PC-9 (cell line): ENCODE measurements at regions of chr2 and their contacts with region 1.

Region 1: GRCh38 chr2:172710584-172711024 is 25.0 kb upstream of the RAPGEF4 start:
- DNase-seq: peak; percentile 82 to 100
- H3K4me3 ChIP-seq: no peak overlapping the region
- H3K27ac ChIP-seq: no peak overlapping the region
- H3K4me1 ChIP-seq: peaks cover 10% of the 10 kb centered on the region
- H3K27me3 ChIP-seq: no peaks in the 10 kb centered on the region
- CTCF ChIP-seq: peak; percentile 99

Region 2: DNA sequence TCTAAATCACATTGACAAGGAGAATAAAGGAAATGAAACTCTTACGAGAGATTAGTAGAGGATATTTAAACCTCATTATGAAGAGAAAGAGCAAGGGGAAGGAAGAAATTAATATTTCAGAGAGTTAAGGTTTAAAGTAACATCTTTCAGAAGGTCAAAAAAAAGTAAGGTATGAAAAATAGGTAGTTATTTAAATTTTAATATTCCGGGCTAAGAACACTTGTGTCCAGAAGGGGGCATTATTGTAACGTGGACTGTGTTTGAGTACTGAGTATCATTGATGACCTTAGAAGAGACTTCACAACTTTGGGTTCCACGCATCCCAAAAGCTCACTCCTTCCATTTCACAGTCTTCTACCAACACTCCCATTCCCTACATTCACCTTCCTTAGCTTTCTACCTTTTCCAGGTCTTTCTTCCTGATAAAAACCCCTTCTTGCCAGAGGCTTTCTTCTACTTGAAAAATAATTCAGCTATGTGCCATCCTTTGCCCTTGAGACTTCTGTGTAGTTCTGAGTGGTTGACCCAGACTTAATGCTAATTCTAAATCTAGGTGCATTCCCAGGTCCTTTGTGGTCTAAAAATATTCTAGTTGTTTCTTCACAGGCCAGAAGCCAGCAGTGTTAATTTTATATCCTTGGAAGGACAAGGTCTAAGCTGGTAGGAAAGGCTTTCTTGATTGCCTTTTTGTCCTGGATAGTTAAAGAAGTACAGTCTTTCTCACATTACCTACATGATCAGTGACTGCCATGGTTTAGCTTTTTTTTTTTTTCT is 1006.8 kb before region 1 on chr2:
- CTCF ChIA-PET with region 1: no interaction called
- POLR2A ChIA-PET with region 1: interaction called, 3 read pairs
- intact Hi-C with region 1: loop called (anchors 5 kb)
- DNase-seq: peak; percentile 10 to 59
- H3K4me3 ChIP-seq: no peak overlapping the region
- H3K27ac ChIP-seq: peak overlapping the region; percentile 18; the same call in 1 of the 2 replicates
- H3K4me1 ChIP-seq: no peaks in the 10 kb centered on the region
- H3K27me3 ChIP-seq: no peaks in the 10 kb centered on the region
- CTCF ChIP-seq: peak; percentile 85

Region 3: GRCh38 chr2:172484253-172484652 is 226.4 kb before region 1 on chr2:
- CTCF ChIA-PET with region 1: interaction called, 3 read pairs
- POLR2A ChIA-PET with region 1: no interaction called
- intact Hi-C with region 1: loop called (anchors 5 kb)
- DNase-seq: no peak
- H3K4me3 ChIP-seq: no peak overlapping the region
- H3K27ac ChIP-seq: no peak overlapping the region
- H3K4me1 ChIP-seq: 0 out of 2 replicates have a peak, but pooled peaks cover 5% of the 10 kb centered on the region
- H3K27me3 ChIP-seq: no peaks in the 10 kb centered on the region
- CTCF ChIP-seq: peak; percentile 89

Region 4: GRCh38 chr2:172588931-172589330 is 121.7 kb before region 1 on chr2:
- CTCF ChIA-PET with region 1: interaction called, 14 read pairs
- POLR2A ChIA-PET with region 1: no interaction called
- intact Hi-C with region 1: loop called (anchors 1 kb)
- DNase-seq: peak in 1 of 2 experiments; percentile 73
- H3K4me3 ChIP-seq: no peak overlapping the region
- H3K27ac ChIP-seq: 0 out of 2 replicates have a peak overlapping the region, but pooled peaks have one; percentile 1
- H3K4me1 ChIP-seq: peaks cover 13% of the 10 kb centered on the region
- H3K27me3 ChIP-seq: no peaks in the 10 kb centered on the region
- CTCF ChIP-seq: no peak

Region 5: GRCh38 chr2:172783091-172783898 is 72.7 kb after region 1 on chr2:
- CTCF ChIA-PET with region 1: no interaction called
- POLR2A ChIA-PET with region 1: no interaction called
- intact Hi-C with region 1: loop called (anchors 1 kb)
- DNase-seq: peak; percentile 95 to 100
- H3K4me3 ChIP-seq: no peak overlapping the region
- H3K27ac ChIP-seq: peak overlapping the region; percentile 72
- H3K4me1 ChIP-seq: peaks cover 33% of the 10 kb centered on the region
- H3K27me3 ChIP-seq: no peaks in the 10 kb centered on the region
- CTCF ChIP-seq: no peak; the same call in 1 of the 2 replicates